ENCODE measurements at regions of chr19 and their contacts with region 1.

Region 1: DNA sequence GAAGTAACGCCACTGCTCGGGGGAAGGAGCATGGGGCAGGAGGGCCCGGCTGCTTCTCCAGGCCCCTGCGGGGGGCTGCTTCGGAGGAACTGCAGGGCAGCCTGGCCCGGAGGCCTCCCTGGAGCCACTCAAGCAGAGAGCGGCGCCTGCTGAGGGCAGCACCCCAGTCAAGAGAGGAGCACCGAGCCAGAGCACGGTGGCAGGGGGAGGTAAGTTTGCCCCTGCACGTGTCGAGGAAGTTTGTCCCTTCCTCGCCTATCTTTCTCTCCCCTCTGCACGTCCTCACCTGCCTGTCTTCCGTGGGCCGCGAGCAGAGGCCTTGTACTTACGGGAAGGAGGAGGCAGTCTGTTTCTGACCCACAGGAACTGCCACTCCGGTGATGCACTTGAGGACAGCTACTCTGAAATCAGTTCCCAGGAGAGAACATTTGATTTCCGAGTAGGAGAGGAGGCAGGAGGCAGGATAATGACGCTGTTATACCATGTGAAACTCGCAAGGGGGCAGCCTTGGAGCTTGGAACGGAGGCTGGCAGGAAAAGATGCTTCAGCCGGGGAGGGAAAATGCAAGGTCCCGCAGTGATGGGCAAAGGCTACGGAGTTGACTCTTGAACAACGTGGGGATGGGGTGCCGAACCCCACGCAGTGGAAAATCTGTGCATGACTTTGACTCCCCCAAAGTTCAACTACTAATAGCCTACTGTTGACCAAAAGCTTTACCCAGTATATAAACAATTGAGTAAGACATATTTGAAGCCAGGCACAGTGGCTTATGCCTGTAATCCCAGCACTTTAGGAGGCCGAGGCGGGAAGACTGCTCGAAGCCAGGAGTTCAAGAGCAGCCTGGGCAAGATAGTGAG is 5.0 kb downstream of the FFAR1 start:
- DNase-seq: peak; percentile 45 to 95 (median 77)

Region 2: DNA sequence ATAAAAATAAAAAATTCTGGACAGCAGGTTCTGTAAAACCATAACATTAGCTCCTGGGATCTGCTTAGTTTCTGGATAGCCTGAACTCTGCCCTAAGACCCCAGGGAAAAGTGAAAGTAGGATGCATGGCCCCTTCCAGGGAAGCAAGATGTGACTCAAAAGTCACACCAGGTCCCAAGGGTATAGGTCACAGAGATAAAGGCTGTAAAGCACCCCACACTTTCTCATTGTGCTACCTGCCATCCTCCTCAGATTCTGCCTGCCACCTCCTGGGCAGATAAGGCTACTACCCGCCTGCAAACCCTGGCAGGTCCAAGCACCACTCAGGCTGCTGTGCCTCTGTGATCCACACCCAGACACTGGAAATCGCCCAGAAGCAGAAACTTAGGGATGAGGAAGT is 116.0 kb after region 1 on chr19:
- intact Hi-C with region 1: loop called (anchors 2 kb)
- DNase-seq: peak in 6 of 10 donors; percentile 29 to 88 (median 36)

Region 3: DNA sequence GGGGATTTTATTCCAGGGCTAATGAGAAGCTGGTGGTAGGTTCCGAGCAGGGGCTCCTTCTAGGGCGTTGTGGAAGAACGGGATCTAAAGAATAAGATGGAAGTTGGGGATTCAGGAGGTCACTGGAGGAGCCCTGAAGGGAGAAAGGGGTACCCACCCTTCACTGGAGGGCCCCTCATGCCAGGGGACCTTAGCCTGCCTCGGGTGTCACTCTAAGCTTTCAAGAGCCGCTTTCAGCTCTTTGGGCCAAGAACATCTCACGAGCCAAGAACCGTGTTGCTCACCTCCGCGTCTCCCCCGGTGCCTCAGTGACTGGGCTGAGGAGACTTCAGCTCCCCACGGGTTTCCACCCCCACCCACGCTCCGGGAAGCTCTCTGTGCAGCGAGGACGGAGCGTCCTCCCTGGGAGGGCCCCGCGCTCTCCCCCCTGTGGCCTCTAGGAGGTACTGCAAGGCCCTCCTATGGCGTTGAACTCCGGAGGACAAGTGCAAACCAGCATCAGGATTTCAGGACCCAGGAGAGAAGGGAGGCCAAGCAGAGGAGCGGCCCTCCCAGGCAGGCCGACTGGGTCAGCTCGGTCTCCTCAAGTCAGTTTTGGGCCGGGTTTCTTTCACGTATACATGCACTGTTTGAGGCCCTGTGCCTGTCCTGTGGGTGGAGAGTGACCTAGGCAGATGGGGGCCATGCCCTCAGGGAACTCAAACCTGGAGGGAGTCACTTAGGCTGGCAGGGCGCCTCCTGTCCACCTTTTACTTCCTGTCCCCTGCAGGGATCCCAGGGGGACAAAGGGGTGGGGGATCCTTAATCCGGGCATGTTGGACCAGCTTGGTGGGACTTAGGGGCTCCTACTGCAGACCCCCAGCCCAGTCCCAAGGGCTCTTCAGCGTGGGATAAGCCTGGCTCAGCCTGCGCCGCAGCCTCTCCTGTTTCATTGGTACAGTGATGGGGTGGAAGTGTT is 142.7 kb after region 1 on chr19:
- intact Hi-C with region 1: loop called (anchors 1 kb)
- DNase-seq: peak; percentile 32 to 96 (median 67)

Measured in posterior cingulate gyrus (tissue), 11 donors.